Common myeloid progenitor, CD34-positive (primary cell): ENCODE measurements at regions of chr6 and their contacts with region 1.

Region 1: DNA sequence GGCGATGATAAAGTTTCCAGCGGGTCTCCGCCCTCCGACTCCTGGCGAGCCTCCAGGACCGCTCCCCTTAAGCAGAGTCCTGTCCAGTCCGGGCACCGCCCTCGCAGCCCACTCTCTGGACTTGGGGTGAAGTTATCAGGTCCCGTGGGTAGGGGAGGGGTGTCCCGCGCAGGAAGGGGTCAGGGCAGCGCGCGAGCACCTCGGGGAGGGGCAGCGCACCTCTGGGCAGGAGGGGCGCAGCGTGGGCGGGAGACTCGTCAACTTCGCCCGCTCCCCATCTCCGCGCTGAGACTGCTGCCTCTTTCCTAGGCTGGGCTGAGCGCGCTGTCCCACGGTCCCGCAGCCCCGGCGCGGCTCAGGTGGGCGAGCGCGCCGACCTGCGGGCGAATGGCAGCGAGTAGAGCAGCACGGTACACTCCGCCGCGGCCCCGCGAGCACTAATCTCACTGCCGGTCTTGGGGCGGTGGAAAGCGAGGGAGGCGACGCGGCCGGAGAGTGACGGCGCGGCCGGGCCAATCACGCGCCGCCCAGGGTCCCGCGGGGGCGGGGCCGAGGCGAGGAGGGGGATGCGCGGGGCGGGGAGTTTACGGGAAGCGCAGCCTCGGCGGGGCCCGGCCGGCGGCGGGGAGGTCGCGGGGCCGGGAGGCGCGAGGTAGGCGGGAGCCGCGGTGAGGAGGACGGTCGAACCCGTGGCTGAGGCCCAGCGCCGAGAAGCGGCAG is at the start of gene MAN1A1:
- DNase-seq: peak; percentile 85 to 93 (median 93)
- H3K4me3 ChIP-seq: peak within 1 kb of the TSS; percentile 76 to 97 (median 94)
- H3K27ac ChIP-seq: peak within 1 kb of the TSS; percentile 76 to 94
- H3K4me1 ChIP-seq: peaks cover 38 to 65% (median 53%) of the 10 kb centered on the region in 4 experiments
- H3K27me3 ChIP-seq: no peaks in the 10 kb centered on the region

Region 2: GRCh38 chr6:119303164-119303887 is 46.2 kb before region 1 on chr6:
- CTCF ChIA-PET with region 1: interaction called, 10 read pairs
- POLR2A ChIA-PET with region 1: no interaction called
- DNase-seq: no peak
- H3K4me3 ChIP-seq: no peak overlapping the region
- H3K27ac ChIP-seq: no peak overlapping the region
- H3K4me1 ChIP-seq: peaks cover 0 to 7% (median 3%) of the 10 kb centered on the region in 4 experiments
- H3K27me3 ChIP-seq: no peaks in the 10 kb centered on the region

Region 3: DNA sequence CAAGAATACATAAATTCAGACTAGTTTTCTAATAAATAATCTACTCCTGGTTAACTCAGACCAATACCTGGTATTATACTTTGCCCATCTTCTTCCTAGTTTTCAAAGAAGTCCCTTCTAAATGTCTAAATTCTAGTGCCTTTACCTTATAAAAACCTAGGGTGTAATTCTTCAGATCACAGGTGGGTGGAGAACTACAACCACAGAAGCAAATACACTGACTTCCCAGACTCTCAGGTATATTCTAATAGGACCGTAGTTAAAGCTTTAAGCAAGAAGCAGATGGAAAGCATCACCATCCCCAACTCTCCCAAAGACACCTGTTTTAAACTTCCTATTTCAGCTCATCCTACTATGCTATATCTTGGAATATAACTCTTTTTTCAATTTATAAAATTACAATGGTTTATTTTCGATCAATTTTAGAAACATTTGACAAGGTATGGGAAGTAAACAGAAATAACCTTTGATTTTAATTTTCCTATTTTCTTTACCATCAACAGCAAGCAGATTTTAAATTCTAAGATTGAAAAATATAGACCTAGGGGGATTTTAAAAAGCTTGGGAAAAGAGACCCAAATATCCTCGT is 15.7 kb before region 1 on chr6:
- CTCF ChIA-PET with region 1: interaction called, 68 read pairs
- POLR2A ChIA-PET with region 1: no interaction called
- DNase-seq: peak in 1 of 3 donors; percentile 46
- H3K4me3 ChIP-seq: no peak overlapping the region
- H3K27ac ChIP-seq: no peak overlapping the region
- H3K4me1 ChIP-seq: peaks cover 5 to 58% (median 26%) of the 10 kb centered on the region in 4 experiments
- H3K27me3 ChIP-seq: no peaks in the 10 kb centered on the region

Region 4: GRCh38 chr6:119368951-119369350 is 19.5 kb after region 1 on chr6:
- CTCF ChIA-PET with region 1: no interaction called
- POLR2A ChIA-PET with region 1: no interaction called
- DNase-seq: no peak
- H3K4me3 ChIP-seq: no peak overlapping the region
- H3K27ac ChIP-seq: no peak overlapping the region
- H3K4me1 ChIP-seq: no peaks in the 10 kb centered on the region
- H3K27me3 ChIP-seq: no peaks in the 10 kb centered on the region

Region 5: GRCh38 chr6:119423996-119424395 is 74.5 kb after region 1 on chr6:
- CTCF ChIA-PET with region 1: no interaction called
- POLR2A ChIA-PET with region 1: no interaction called
- DNase-seq: no peak
- H3K4me3 ChIP-seq: no peak overlapping the region
- H3K27ac ChIP-seq: no peak overlapping the region
- H3K4me1 ChIP-seq: no peaks in the 10 kb centered on the region
- H3K27me3 ChIP-seq: no peaks in the 10 kb centered on the region

Region 6: GRCh38 chr6:119669221-119669620 is 319.7 kb after region 1 on chr6:
- CTCF ChIA-PET with region 1: no interaction called
- POLR2A ChIA-PET with region 1: no interaction called
- DNase-seq: peak; percentile 22 to 86 (median 75)
- H3K4me3 ChIP-seq: no peak overlapping the region
- H3K27ac ChIP-seq: no peak overlapping the region
- H3K4me1 ChIP-seq: peaks cover 5 to 30% (median 16%) of the 10 kb centered on the region in 4 experiments
- H3K27me3 ChIP-seq: no peaks in the 10 kb centered on the region

Region 7: GRCh38 chr6:119978274-119978889 is 628.9 kb after region 1 on chr6:
- CTCF ChIA-PET with region 1: interaction called, 22 read pairs
- POLR2A ChIA-PET with region 1: no interaction called
- DNase-seq: peak; percentile 49 to 66 (median 61)
- H3K4me3 ChIP-seq: no peak overlapping the region
- H3K27ac ChIP-seq: no peak overlapping the region
- H3K4me1 ChIP-seq: no peaks in the 10 kb centered on the region
- H3K27me3 ChIP-seq: no peaks in the 10 kb centered on the region